ENCODE measurements at regions of chr20 and their contacts with region 1.

Region 1: GRCh38 chr20:50790651-50791277 is 4.1 kb upstream of the BCAS4 start:
- DNase-seq: peak; percentile 88
- ATAC-seq: peak; percentile 70
- H3K4me3 Mint-ChIP-seq: no peak overlapping the region
- H3K27ac Mint-ChIP-seq: peak overlapping the region; percentile 77
- H3K4me1 Mint-ChIP-seq: peaks cover 26% of the 10 kb centered on the region
- H3K27me3 Mint-ChIP-seq: no peaks in the 10 kb centered on the region

Region 2: GRCh38 chr20:50804418-50805064 is 13.8 kb after region 1 on chr20:
- CTCF ChIA-PET with region 1: interaction called, 37 read pairs
- POLR2A ChIA-PET with region 1: interaction called, 3 read pairs
- DNase-seq: peak; percentile 69
- ATAC-seq: peak; percentile 90
- H3K4me3 Mint-ChIP-seq: peak overlapping the region; percentile 61
- H3K27ac Mint-ChIP-seq: peak overlapping the region; percentile 91
- H3K4me1 Mint-ChIP-seq: peaks cover 43% of the 10 kb centered on the region
- H3K27me3 Mint-ChIP-seq: no peaks in the 10 kb centered on the region

Region 3: DNA sequence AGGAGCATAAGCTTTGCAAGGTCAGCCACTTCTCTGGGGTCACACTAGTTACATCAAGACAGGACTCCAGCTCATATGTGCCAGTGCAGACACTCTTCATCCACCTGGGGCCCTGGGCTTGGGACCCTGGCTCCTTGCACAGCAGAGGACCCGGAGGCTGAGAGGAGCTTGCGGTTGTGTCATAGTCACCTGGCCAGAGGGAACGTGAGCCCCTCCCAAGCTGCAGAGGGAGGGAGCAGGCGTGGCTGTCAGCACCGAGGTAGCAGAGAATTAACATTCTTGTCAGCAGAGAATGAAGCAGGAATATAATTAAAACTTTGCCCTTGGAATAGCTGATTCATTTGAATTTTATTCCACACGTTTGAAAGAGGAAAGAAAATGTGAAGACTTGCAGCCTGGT is 40.9 kb after region 1 on chr20:
- CTCF ChIA-PET with region 1: interaction called, 11 read pairs
- POLR2A ChIA-PET with region 1: no interaction called
- DNase-seq: no peak
- ATAC-seq: no peak
- H3K4me3 Mint-ChIP-seq: no peak overlapping the region
- H3K27ac Mint-ChIP-seq: peak overlapping the region; percentile 39
- H3K4me1 Mint-ChIP-seq: peaks cover 3% of the 10 kb centered on the region
- H3K27me3 Mint-ChIP-seq: no peaks in the 10 kb centered on the region

Region 4: GRCh38 chr20:50891138-50891537 is 100.4 kb after region 1 on chr20:
- CTCF ChIA-PET with region 1: interaction called, 27 read pairs
- POLR2A ChIA-PET with region 1: interaction called, 5 read pairs
- DNase-seq: no peak
- ATAC-seq: no peak
- H3K4me3 Mint-ChIP-seq: no peak overlapping the region
- H3K27ac Mint-ChIP-seq: peak overlapping the region; percentile 18
- H3K4me1 Mint-ChIP-seq: peaks cover 3% of the 10 kb centered on the region
- H3K27me3 Mint-ChIP-seq: no peaks in the 10 kb centered on the region

Region 5: DNA sequence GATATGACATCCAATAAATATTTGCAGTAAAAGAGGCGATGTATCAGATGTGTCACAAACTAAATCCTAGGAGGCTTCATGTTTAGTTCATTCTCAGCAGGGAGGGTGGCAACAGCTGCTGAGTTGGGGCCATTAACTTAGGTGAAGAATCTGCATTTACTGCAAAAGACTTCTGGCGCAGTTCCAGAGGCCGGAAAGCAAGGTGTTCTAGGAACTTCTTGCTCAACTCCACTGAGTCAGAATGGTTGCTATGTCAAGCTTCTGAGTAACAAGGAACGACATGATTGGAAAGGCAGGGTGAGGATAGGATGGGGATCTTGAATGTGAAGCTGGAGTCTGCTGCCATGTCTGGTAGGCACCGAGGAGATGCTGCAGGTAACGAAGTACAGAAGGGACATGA is 128.8 kb after region 1 on chr20:
- CTCF ChIA-PET with region 1: interaction called, 407 read pairs
- POLR2A ChIA-PET with region 1: interaction called, 3 read pairs
- DNase-seq: no peak
- ATAC-seq: no peak
- H3K4me3 Mint-ChIP-seq: no peak overlapping the region
- H3K27ac Mint-ChIP-seq: peak overlapping the region; percentile 47
- H3K4me1 Mint-ChIP-seq: peaks cover 43% of the 10 kb centered on the region
- H3K27me3 Mint-ChIP-seq: no peaks in the 10 kb centered on the region

Region 6: GRCh38 chr20:50958615-50959542 is 168.1 kb after region 1 on chr20 and contains the start of gene MOCS3:
- CTCF ChIA-PET with region 1: interaction called, 49 read pairs
- POLR2A ChIA-PET with region 1: interaction called, 41 read pairs
- DNase-seq: peak; percentile 91
- ATAC-seq: peak; percentile 75
- H3K4me3 Mint-ChIP-seq: peak within 1 kb of the TSS; percentile 93
- H3K27ac Mint-ChIP-seq: peak within 1 kb of the TSS; percentile 99
- H3K4me1 Mint-ChIP-seq: peaks cover 44% of the 10 kb centered on the region
- H3K27me3 Mint-ChIP-seq: no peaks in the 10 kb centered on the region
- total RNA-seq, gene MOCS3: 4.8 to 5.7 TPM

Measured in activated CD8-positive, alpha-beta T cell treated with anti-CD3 and anti-CD28 coated beads, Interleukin-2, amount 10 ng/mL, durations not matched to agents 7 days and 5 days (primary cell).